ENCODE measurements at regions of chr2 and their contacts with region 1.

Region 1: GRCh38 chr2:64653349-64654062 is at the start of gene SERTAD2:
- DNase-seq: peak; percentile 91 to 95 (median 93)
- H3K4me3 ChIP-seq: peak within 1 kb of the TSS; percentile 84 to 96 (median 90)
- H3K27ac ChIP-seq: peak within 1 kb of the TSS; percentile 81 to 93
- H3K4me1 ChIP-seq: peaks cover 45 to 84% (median 73%) of the 10 kb centered on the region in 4 experiments
- H3K27me3 ChIP-seq: no peaks in the 10 kb centered on the region

Region 2: DNA sequence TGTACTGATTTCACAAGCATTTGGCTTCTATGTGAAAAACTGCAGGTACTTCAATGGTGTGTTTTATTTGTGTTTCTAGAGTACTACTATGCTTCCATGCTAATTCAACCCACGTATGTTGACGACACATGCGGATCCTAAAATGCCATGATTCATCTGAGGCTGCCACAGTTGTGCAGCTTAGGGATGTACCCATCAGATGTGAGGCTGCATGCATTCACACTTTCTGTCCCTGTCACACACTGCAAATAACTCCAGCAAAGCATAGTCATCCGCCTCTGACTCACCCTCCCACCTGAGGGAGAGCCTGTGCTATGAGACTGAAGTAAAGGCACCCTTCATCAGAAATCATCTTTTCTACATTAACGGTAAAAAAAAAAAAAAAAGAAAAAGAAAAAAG is 22.4 kb after region 1 on chr2:
- CTCF ChIA-PET with region 1: interaction called, 23 read pairs
- POLR2A ChIA-PET with region 1: interaction called, 7 read pairs
- DNase-seq: peak in 2 of 3 donors; percentile 45 to 70
- H3K4me3 ChIP-seq: no peak overlapping the region
- H3K27ac ChIP-seq: no peak overlapping the region
- H3K4me1 ChIP-seq: peaks cover 4 to 33% (median 18%) of the 10 kb centered on the region in 4 experiments
- H3K27me3 ChIP-seq: no peaks in the 10 kb centered on the region

Region 3: GRCh38 chr2:64727013-64727767 is 73.7 kb after region 1 on chr2:
- CTCF ChIA-PET with region 1: interaction called, 10 read pairs
- POLR2A ChIA-PET with region 1: interaction called, 3 read pairs
- DNase-seq: peak in 2 of 3 donors; percentile 74 to 80
- H3K4me3 ChIP-seq: peak overlapping the region in 5 of 7 experiments; percentile 11 to 51 (median 25)
- H3K27ac ChIP-seq: peak overlapping the region; percentile 28 to 69
- H3K4me1 ChIP-seq: peaks cover 25 to 48% (median 42%) of the 10 kb centered on the region in 4 experiments
- H3K27me3 ChIP-seq: no peaks in the 10 kb centered on the region

Region 4: GRCh38 chr2:64750817-64751285 is 97.3 kb after region 1 on chr2:
- CTCF ChIA-PET with region 1: interaction called, 49 read pairs
- POLR2A ChIA-PET with region 1: interaction called, 5 read pairs
- DNase-seq: peak; percentile 100
- H3K4me3 ChIP-seq: peak overlapping the region; percentile 60 to 97 (median 93)
- H3K27ac ChIP-seq: peak overlapping the region; percentile 80 to 92
- H3K4me1 ChIP-seq: peaks cover 20 to 33% (median 26%) of the 10 kb centered on the region in 4 experiments
- H3K27me3 ChIP-seq: no peaks in the 10 kb centered on the region

Region 5: GRCh38 chr2:64831134-64831976 is 177.8 kb after region 1 on chr2:
- CTCF ChIA-PET with region 1: interaction called, 27 read pairs
- POLR2A ChIA-PET with region 1: interaction called, 10 read pairs
- DNase-seq: peak; percentile 57 to 77 (median 74)
- H3K4me3 ChIP-seq: no peak overlapping the region
- H3K27ac ChIP-seq: peak overlapping the region in 1 of 2 experiments; percentile 55
- H3K4me1 ChIP-seq: peaks cover 0 to 9% (median 3%) of the 10 kb centered on the region in 4 experiments
- H3K27me3 ChIP-seq: no peaks in the 10 kb centered on the region

Region 6: DNA sequence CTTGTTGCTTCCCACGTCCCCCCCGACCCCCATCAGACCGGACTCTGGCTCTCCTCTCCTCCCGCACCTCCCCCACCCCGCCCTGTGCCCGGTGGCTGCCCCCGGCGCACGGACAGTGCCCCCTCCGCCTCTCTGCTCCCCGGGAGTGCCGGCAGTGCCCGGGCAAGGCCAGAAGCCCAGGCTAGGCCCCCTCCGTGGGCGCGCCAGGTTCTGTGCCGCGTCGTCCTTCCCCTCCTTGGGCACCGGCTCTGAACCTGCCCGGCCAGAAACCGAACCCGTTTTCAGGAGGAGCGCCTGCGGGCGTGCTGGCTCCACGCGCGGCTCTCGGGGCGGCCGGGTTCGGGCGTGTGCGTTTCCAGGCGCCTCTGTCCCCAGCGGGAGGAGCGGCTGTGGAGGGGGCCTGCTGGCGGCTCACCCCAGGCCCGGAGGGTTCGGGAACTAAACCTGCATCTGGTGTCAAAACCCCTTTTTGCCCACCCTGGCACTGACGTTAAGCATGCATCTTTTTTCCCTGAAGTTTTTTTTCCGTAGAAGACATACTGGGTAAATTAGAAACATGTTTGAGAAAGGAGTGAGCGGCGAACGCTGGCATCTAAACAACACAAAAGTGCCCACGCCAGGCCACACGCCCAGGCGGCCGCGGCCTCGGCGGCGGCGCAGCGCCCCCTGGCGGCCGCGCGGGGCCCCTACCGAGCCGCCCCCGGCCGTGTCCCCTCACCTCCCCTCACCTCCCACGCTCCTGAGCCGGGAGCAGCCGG is 211.7 kb after region 1 on chr2:
- CTCF ChIA-PET with region 1: interaction called, 12 read pairs
- POLR2A ChIA-PET with region 1: interaction called, 3 read pairs
- DNase-seq: peak; percentile 61 to 84 (median 82)
- H3K4me3 ChIP-seq: peak overlapping the region; percentile 42 to 83 (median 75)
- H3K27ac ChIP-seq: peak overlapping the region in 1 of 2 experiments; percentile 65
- H3K4me1 ChIP-seq: peaks cover 10 to 52% (median 23%) of the 10 kb centered on the region in 4 experiments
- H3K27me3 ChIP-seq: no peaks in the 10 kb centered on the region

Measured in common myeloid progenitor, CD34-positive (primary cell).